ENCODE measurements at regions of chr11 and their contacts with region 1.

Region 1: DNA sequence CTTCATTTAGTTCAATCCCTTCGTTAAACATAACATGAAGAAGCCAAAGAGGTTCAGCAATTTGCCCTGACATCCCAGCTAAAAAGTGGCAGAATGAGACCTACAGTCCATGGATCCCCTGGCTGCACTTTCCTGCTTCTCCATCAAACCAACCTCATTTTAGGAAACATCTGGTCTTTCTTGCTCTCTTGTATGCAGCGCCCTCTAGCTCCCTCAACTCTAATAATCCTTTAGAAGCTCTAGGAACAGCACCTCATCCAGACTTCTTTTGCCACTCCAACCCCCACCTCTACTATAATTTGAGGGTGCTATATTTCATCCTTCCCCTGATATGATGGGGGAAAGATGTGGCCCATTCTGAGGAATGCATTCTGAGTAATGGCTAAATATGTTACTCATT is 7.4 kb downstream of the CNTF start:
- DNase-seq: peak; percentile 26
- H3K4me3 Mint-ChIP-seq: no peak overlapping the region
- H3K27ac Mint-ChIP-seq: no peak overlapping the region
- H3K4me1 Mint-ChIP-seq: no peaks in the 10 kb centered on the region
- H3K27me3 Mint-ChIP-seq: no peaks in the 10 kb centered on the region

Region 2: GRCh38 chr11:58567889-58568512 is 61.9 kb before region 1 on chr11:
- CTCF ChIA-PET with region 1: interaction called, 50 read pairs
- DNase-seq: peak; percentile 84
- H3K4me3 Mint-ChIP-seq: no peak overlapping the region
- H3K27ac Mint-ChIP-seq: peak overlapping the region; percentile 62
- H3K4me1 Mint-ChIP-seq: peaks cover 59% of the 10 kb centered on the region
- H3K27me3 Mint-ChIP-seq: no peaks in the 10 kb centered on the region

Region 3: GRCh38 chr11:58573451-58574104 is 56.3 kb before region 1 on chr11:
- CTCF ChIA-PET with region 1: interaction called, 50 read pairs
- DNase-seq: peak; percentile 49
- H3K4me3 Mint-ChIP-seq: peak overlapping the region; percentile 86
- H3K27ac Mint-ChIP-seq: peak overlapping the region; percentile 100
- H3K4me1 Mint-ChIP-seq: peaks cover 62% of the 10 kb centered on the region
- H3K27me3 Mint-ChIP-seq: no peaks in the 10 kb centered on the region

Region 4: GRCh38 chr11:58640386-58641023 is 10.6 kb after region 1 on chr11:
- CTCF ChIA-PET with region 1: interaction called, 22 read pairs
- DNase-seq: no peak
- H3K4me3 Mint-ChIP-seq: no peak overlapping the region
- H3K27ac Mint-ChIP-seq: no peak overlapping the region
- H3K4me1 Mint-ChIP-seq: peaks cover 14% of the 10 kb centered on the region
- H3K27me3 Mint-ChIP-seq: no peaks in the 10 kb centered on the region